ENCODE measurements at regions of chr6 and their contacts with region 1.

Region 1: GRCh38 chr6:2848851-2849250 is 7.2 kb upstream of the SERPINB1 start:
- DNase-seq: peak; percentile 36 to 88 (median 68)
- ATAC-seq: peak; percentile 87 to 97
- H3K4me3 Mint-ChIP-seq: peak overlapping the region in 9 of 10 donors; percentile 16 to 77 (median 69)
- H3K27ac Mint-ChIP-seq: peak overlapping the region; percentile 61 to 98 (median 95)
- H3K4me1 Mint-ChIP-seq: peaks cover 20 to 52% (median 44%) of the 10 kb centered on the region in 4 donors
- H3K27me3 Mint-ChIP-seq: no peaks in the 10 kb centered on the region

Region 2: DNA sequence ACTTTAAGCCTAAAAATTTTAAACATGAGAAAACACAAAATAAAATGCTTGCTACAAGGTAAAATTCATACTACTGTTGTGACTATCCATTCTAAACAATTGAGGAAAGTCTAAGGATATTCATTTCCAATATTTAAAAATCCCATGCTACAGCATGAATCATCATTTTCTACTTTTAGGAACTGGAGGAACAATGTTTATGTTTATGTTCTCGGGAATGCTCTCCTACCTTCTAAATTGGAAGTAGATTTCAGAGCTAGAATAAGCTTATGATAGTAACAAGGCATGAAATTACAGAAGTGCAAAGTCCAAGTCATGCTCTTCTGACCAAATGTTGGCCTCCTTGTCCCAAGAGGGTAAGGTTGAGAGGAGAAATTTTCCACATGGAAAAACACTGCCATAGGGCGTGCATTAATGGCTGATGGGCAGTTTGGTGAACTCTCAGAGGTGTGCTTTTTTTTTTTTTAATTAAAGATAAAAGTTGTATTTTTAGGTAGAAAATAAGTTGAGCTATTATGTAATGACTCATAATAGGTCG is 92.1 kb before region 1 on chr6:
- POLR2A ChIA-PET with region 1: no interaction called
- DNase-seq: no peak
- ATAC-seq: no peak
- H3K4me3 Mint-ChIP-seq: no peak overlapping the region
- H3K27ac Mint-ChIP-seq: no peak overlapping the region
- H3K4me1 Mint-ChIP-seq: peaks cover 0 to 16% (median 11%) of the 10 kb centered on the region in 4 donors
- H3K27me3 Mint-ChIP-seq: peaks cover 0 to 4% (median 0%) of the 10 kb centered on the region in 5 donors

Region 3: DNA sequence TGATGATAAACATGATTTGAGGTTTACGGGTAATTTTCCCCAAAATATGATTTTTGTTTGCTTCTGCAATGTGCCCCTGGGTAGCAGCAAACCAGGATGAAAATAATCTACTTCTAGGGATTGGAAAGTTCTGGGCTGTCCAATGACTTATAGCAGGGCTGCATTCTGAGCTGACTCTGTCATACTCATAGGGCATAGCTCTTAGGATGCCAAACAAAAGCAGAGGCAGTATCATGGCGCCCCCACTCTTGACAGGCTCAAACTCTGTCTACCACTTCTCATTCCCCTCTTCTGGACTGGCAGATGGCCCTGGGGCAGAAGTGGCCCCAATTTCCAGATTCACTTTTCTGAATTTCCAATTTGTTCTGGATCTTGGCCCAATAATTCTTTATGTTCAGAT is 17.5 kb before region 1 on chr6:
- POLR2A ChIA-PET with region 1: no interaction called
- DNase-seq: no peak
- ATAC-seq: no peak
- H3K4me3 Mint-ChIP-seq: no peak overlapping the region
- H3K27ac Mint-ChIP-seq: peak overlapping the region in 3 of 10 donors; percentile 14 to 41 (median 27)
- H3K4me1 Mint-ChIP-seq: peaks cover 6 to 16% (median 14%) of the 10 kb centered on the region in 4 donors
- H3K27me3 Mint-ChIP-seq: no peaks in the 10 kb centered on the region

Region 4: DNA sequence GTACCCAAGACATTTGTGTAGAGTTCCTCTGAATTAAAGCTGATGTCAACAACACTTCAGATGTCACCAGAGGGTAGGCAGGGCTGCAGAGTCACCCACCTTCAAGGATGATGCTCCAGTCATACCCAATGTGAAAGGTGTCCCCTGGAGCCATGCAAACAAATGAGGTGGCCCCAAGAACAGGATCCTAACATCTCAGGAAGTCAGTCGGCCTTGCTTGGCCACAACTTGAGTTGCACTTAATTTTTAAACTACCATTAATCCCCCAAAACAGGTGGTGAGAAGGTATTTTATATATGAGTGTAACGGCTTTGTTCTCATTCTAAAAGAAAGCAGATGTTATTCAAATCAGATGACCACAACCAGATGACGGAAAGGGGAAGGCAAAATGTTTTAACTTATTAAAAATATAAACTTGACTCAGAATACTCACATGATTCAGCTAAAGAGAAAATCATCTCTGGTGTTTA is 13.9 kb after region 1 on chr6:
- POLR2A ChIA-PET with region 1: interaction called, 27 read pairs
- DNase-seq: no peak
- ATAC-seq: no peak
- H3K4me3 Mint-ChIP-seq: peak overlapping the region in 7 of 10 donors; percentile 18 to 83 (median 74)
- H3K27ac Mint-ChIP-seq: peak overlapping the region; percentile 95 to 99 (median 98)
- H3K4me1 Mint-ChIP-seq: peaks cover 39 to 91% (median 67%) of the 10 kb centered on the region in 4 donors
- H3K27me3 Mint-ChIP-seq: peaks cover 0 to 2% (median 0%) of the 10 kb centered on the region in 5 donors

Region 5: GRCh38 chr6:2900821-2901644 is 52.2 kb after region 1 on chr6:
- POLR2A ChIA-PET with region 1: interaction called, 39 read pairs
- DNase-seq: peak in 1 of 10 donors; percentile 12
- ATAC-seq: no peak
- H3K4me3 Mint-ChIP-seq: peak overlapping the region; percentile 97 to 100 (median 100)
- H3K27ac Mint-ChIP-seq: peak overlapping the region; percentile 91 to 98 (median 98)
- H3K4me1 Mint-ChIP-seq: peaks cover 40 to 71% (median 62%) of the 10 kb centered on the region in 4 donors
- H3K27me3 Mint-ChIP-seq: no peaks in the 10 kb centered on the region

Region 6: GRCh38 chr6:2911171-2911570 is 62.3 kb after region 1 on chr6:
- POLR2A ChIA-PET with region 1: interaction called, 15 read pairs
- DNase-seq: no peak
- ATAC-seq: peak in 1 of 2 donors; percentile 15
- H3K4me3 Mint-ChIP-seq: no peak overlapping the region
- H3K27ac Mint-ChIP-seq: peak overlapping the region in 4 of 10 donors; percentile 11 to 33 (median 21)
- H3K4me1 Mint-ChIP-seq: peaks cover 24 to 51% (median 36%) of the 10 kb centered on the region in 4 donors
- H3K27me3 Mint-ChIP-seq: no peaks in the 10 kb centered on the region

Measured in naive thymus-derived CD8-positive, alpha-beta T cell (primary cell).